PC-9 (cell line): ENCODE measurements at regions of chr14 and their contacts with region 1.

Region 1: DNA sequence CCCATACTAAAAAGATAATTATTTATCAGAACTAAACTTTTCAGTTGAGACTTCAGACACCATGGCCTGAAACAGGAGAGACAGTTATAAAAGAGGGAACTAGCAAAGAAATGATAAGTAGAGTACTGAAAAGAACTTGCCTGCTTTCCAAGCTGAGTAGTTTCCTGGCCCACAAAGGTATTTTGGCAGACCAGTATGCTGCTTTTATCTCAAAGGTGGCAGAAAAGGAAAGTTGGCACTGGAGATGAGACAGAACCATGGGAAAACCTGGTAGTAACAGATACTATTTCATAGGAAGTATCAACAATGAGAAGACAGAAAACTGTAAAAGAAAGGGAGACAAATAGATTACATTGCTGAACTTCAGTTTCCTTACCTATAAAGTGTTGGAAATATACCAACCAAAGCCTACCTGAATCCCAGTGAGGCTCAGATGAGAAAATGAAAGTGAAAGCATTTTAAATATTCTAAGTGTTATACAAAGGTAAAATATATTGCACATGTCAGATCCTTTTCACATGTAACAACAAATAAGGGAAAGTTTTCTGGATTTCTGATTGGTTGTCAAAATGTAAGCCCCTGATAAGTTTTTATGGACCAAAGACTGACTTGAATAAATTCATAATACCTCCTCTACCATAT is 155.3 kb upstream of the FSCB start:
- DNase-seq: no peak
- H3K4me3 ChIP-seq: no peak overlapping the region
- H3K27ac ChIP-seq: no peak overlapping the region
- H3K4me1 ChIP-seq: no peaks in the 10 kb centered on the region
- H3K27me3 ChIP-seq: no peaks in the 10 kb centered on the region
- CTCF ChIP-seq: no peak

Region 2: DNA sequence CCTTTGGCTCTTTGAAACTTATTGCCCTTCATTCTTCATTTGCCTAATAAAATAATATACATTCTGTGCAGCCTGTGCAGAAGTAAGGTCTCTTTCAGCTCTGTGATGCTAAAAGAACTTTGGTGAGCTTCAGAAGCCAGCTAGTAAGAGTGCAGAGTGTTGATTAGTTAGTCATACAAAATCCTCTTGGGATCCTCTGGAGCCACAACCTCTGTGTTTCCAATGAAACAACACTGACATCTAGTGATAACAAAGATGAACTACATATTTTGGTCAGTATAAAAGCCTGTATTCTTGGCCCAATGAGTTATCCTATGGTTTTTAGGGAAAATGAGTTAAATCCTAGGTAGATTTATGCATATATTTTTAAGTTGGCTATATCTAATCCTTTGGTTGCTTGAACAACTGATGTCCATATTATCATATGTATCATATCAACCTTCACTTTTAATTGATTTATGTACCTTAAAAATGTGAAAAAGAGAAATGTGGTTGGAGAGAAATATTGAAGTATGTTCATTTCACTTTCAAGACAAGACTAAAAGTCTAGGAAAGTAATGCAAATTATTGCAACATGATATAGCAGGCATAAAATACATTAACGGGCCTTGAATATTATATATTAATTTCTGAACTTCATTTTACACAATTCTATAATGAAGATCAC is 141.0 kb after region 1 on chr14:
- CTCF ChIA-PET with region 1: no interaction called
- POLR2A ChIA-PET with region 1: no interaction called
- intact Hi-C with region 1: loop called (anchors 5 kb)
- DNase-seq: peak in 1 of 2 experiments; percentile 48
- H3K4me3 ChIP-seq: no peak overlapping the region
- H3K27ac ChIP-seq: no peak overlapping the region
- H3K4me1 ChIP-seq: no peaks in the 10 kb centered on the region
- H3K27me3 ChIP-seq: no peaks in the 10 kb centered on the region
- CTCF ChIP-seq: peak; percentile 79